ENCODE measurements at regions of chr1 and their contacts with region 1.

Region 1: DNA sequence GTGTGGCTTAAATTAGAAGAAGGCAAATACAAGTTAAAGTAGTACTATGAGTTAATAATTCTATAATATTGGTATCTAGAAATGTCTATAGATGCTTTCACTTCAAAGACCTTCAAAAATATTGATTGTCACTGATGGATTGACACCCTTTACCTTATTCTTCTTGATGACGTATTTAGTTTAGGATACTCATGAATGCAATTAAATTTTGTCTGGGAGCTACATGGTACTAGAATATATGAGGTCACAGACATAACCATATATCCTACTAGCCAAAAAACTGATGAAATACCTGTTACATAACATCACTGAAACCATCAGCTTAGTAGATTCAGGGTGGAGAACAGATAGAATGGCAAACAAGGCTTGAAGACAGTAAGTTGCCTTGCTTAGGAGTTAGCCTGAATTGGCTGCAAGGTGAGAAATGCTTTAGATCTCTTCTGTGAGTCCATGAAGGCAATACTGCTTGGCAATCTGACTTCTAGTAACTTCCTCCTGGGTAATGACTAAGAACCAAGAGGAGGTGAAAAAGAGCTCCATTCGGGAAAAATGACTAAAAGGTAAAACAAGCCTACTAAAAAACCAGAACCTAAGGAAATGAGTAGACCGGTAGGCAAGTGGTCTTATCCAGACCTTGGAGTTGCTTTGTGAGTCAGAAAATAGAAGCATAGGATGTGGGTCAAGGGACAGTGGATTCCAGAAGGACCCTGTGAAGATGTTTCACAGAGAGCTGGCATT is 16.9 kb upstream of the ARHGAP29 start:
- DNase-seq: no peak
- ATAC-seq: no peak

Region 2: DNA sequence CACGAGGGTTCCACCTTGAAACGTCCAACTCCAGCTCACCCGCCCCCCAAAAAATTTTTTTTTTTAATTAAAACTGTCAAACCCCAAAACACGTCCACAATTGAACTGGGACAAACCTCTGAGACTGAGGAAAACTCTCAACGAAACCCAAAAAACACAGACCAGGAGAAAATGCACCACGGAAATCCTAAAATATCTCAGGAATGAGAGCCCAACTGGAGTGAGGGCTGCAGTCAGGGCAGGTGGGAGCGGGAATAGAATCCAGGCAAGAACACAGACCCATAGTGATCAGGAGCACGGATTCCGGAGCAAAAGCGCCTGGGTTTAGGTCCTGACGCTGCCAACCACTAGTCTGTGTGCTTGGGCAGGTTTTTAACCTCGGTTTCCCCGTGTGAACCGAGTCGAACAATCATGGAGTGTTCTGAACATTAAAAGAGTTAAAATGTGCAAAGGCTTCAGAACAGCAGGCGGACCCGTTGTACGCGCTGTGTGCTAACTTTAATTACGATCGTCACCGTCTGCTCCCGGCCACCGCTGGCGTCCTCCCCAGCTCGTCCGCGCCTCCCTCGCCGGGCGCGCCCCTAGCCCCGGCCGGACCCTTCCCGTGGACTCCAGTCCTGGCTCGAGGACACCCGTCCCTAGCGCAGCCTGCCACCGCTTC is 17.5 kb before region 1 on chr1:
- intact Hi-C with region 1: loop called (anchors 1 kb)
- DNase-seq: no peak
- ATAC-seq: peak; percentile 63

Region 3: DNA sequence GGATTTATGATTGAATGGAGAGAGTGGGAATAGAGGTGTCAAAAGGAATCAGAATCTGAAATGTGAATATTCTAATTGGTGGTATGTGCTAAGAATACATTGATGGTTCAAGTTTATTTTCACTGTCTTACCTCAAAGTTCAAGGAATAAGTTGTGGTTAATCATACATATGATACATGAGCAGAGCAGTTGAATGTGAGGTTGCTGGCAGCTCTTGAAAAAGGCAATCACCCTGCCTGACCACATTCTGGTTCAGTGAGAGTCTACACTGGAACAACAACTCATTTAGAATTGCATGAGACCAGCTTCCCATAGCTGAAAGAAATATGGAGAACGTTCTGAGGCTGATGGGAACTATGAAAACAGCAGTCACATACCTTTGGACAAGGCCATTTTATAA is 51.5 kb after region 1 on chr1:
- intact Hi-C with region 1: no loop called
- DNase-seq: no peak
- ATAC-seq: no peak

Measured in sciatic nerve (tissue), 2 donors.